ENCODE measurements at regions of chr15 and their contacts with region 1.

Region 1: GRCh38 chr15:85073556-85074194 is 92.0 kb downstream of the PDE8A start:
- DNase-seq: no peak
- H3K4me3 ChIP-seq: no peak overlapping the region
- H3K27ac ChIP-seq: no peak overlapping the region
- H3K4me1 ChIP-seq: no peaks in the 10 kb centered on the region
- H3K27me3 ChIP-seq: no peaks in the 10 kb centered on the region
- CTCF ChIP-seq: no peak

Region 2: GRCh38 chr15:84818261-84819131 is 255.2 kb before region 1 on chr15:
- CTCF ChIA-PET with region 1: no interaction called
- POLR2A ChIA-PET with region 1: no interaction called
- intact Hi-C with region 1: no loop called
- DNase-seq: no peak
- H3K4me3 ChIP-seq: no peak overlapping the region
- H3K27ac ChIP-seq: no peak overlapping the region
- H3K4me1 ChIP-seq: peaks cover 12% of the 10 kb centered on the region
- H3K27me3 ChIP-seq: no peaks in the 10 kb centered on the region
- CTCF ChIP-seq: no peak

Region 3: DNA sequence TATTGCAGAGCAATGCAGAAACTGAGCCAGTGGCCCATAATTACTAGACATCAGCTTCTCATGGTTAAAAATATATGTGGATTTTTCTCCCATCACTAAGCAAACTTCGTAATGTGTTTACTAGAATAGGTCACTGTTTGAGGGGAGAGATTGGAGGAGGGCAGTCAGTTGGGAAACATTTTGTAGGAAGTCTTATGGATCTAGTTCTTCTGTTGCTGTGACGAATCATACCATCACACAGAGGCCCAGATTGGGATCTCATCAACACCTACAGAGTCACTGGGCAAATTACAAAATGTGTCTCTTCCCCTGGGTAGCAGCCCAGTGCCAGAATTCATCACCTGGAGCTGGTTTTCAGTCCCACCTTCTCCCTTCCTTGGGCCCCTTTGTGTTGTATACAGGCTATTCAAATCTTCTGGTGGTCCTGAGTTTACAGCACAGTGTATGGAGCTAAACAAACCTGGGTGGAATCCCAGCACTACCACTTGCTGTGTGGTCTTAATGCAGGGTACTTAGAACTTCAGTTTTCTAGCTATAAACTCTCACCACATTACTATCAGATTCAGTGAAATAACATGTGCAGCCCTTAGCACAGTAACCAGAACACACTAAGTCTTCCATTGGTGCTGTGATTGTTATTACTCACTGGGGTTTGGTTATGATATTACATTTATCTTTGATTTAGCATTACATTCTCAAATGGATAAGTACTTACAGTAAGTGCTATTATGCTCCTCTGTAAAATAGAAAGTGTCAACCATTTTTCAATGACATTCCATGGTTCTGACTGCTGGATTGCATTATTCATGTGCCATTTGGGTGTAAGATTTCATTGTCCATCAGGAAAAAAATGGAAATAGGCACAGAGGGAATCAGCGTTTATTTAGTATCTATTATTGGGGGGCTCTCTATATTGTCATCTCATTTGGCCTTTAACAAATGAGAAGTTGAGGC is 10.3 kb before region 1 on chr15:
- CTCF ChIA-PET with region 1: no interaction called
- POLR2A ChIA-PET with region 1: interaction called, 13 read pairs
- intact Hi-C with region 1: no loop called
- DNase-seq: no peak
- H3K4me3 ChIP-seq: no peak overlapping the region
- H3K27ac ChIP-seq: no peak overlapping the region
- H3K4me1 ChIP-seq: no peaks in the 10 kb centered on the region
- H3K27me3 ChIP-seq: no peaks in the 10 kb centered on the region
- CTCF ChIP-seq: no peak

Region 4: DNA sequence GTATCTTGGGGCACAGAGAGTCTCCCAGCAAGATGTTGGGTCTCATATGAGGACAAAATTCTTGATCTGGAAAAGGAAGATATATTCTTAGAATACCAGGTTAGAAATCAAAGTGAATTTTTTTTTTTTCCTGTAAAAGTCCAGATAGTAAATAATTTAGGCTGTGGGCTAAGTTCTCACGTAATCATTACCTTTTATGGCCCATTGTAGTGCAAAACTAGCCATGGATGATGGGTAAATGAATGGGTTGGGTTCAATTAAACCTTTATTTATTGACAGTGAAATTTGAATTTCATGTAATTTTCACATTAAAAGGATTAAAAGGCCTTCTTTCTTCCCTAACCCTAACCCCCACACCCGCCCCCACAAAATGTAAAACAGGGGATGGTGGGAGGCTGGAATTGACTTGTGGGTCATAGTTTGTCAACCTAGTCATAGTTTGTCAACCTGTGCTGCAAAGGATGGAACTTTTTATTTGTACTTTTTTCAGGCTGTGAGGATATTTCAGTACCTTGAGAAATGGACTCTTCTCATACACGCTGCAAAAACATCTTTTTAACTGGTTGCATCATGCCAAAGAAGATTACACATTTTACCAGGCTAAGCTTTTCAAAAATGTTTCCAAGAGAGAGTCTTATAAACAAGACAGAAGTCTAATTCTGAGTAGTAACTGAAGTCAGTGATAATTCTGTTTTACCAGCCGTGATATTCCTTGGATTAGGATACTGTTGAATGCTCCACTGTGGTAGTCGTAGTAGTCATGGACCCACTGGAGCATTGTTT is 445.5 kb after region 1 on chr15:
- CTCF ChIA-PET with region 1: no interaction called
- POLR2A ChIA-PET with region 1: no interaction called
- intact Hi-C with region 1: no loop called
- DNase-seq: no peak
- H3K4me3 ChIP-seq: no peak overlapping the region
- H3K27ac ChIP-seq: no peak overlapping the region
- H3K4me1 ChIP-seq: no peaks in the 10 kb centered on the region
- H3K27me3 ChIP-seq: no peaks in the 10 kb centered on the region
- CTCF ChIP-seq: no peak

Region 5: GRCh38 chr15:85652457-85652856 is 578.8 kb after region 1 on chr15:
- CTCF ChIA-PET with region 1: no interaction called
- POLR2A ChIA-PET with region 1: no interaction called
- intact Hi-C with region 1: no loop called
- DNase-seq: no peak
- H3K4me3 ChIP-seq: no peak overlapping the region
- H3K27ac ChIP-seq: no peak overlapping the region
- H3K4me1 ChIP-seq: no peaks in the 10 kb centered on the region
- H3K27me3 ChIP-seq: no peaks in the 10 kb centered on the region
- CTCF ChIP-seq: no peak

Measured in PC-9 (cell line).